ENCODE measurements at regions of chr12 and their contacts with region 1.

Region 1: GRCh38 chr12:69553627-69554248 is 31.5 kb upstream of the CCT2 start:
- DNase-seq: no peak
- ATAC-seq: no peak
- H3K4me3 Mint-ChIP-seq: no peak overlapping the region
- H3K27ac Mint-ChIP-seq: no peak overlapping the region
- H3K4me1 Mint-ChIP-seq: no peaks in the 10 kb centered on the region
- H3K27me3 Mint-ChIP-seq: no peaks in the 10 kb centered on the region
- CTCF ChIP-seq: no peak

Region 2: DNA sequence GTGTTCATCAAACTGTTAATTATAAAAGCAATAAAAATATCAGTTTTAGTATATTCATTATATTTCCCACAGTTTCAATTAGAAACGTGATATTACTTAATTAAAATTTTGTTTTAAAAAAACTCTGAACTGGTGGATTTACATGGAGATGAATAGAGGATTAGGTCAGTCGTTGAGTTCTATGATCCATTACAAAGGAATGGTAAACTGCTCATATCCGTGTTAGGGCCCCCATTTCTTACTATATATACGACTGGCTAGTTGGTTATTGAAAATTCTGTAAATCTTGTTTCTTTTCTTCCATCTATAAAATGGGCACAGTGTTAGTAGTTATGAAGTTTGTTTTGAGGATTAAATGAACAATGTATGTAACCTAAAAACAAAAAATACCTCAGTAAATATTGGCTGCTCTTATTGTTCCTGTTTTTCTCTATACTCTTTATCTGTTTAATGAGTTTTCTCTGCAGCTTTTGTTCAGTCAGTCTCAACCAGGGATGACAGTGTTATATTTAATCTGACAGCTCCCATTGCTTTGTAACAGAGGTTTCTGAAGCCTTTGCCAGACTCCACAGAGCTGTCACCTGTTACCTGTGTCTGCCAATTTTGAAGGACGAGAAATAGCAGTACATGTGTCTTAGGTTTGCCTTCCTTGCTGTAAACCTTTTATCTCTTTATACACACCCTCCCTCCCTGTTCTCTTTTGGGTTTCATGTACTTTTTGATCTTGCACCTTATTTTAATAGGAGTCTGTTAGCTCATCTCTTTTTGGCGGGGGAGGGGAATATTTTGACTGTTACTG is 42.1 kb before region 1 on chr12:
- CTCF ChIA-PET with region 1: no interaction called
- POLR2A ChIA-PET with region 1: no interaction called
- intact Hi-C with region 1: loop called (anchors 5 kb)
- DNase-seq: no peak
- ATAC-seq: no peak
- H3K4me3 Mint-ChIP-seq: no peak overlapping the region
- H3K27ac Mint-ChIP-seq: no peak overlapping the region
- H3K4me1 Mint-ChIP-seq: peaks cover 50% of the 10 kb centered on the region
- H3K27me3 Mint-ChIP-seq: no peaks in the 10 kb centered on the region
- CTCF ChIP-seq: no peak